ENCODE measurements at regions of chr10 and their contacts with region 1.

Region 1: GRCh38 chr10:118459726-118460193 is 117.6 kb upstream of the FAM204A start:
- H3K4me3 ChIP-seq: no peak overlapping the region
- H3K27ac ChIP-seq: no peak overlapping the region
- H3K4me1 ChIP-seq: 0 out of 2 replicates have a peak, but pooled peaks cover 3% of the 10 kb centered on the region
- CTCF ChIP-seq: peak; percentile 62

Region 2: DNA sequence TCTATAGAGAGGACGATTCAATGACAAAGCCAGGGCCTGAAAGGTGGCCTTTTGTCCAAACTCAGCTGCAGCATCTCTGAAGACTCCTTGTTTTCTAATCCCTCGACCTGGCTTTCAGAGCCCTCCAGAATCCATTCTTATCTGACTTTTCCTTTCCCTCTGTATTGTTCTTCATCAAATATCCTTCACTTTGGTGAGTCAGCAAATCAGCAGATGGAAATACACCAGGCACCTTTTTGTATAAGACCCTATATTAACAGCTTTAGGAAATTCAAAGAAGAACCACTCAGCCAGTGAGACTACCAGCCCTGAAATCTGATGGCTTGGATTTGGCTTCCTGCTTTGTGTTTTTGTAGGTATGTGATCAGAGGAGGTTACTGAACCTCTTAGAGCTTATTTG is 331.1 kb before region 1 on chr10:
- CTCF ChIA-PET with region 1: no interaction called
- POLR2A ChIA-PET with region 1: no interaction called
- H3K4me3 ChIP-seq: no peak overlapping the region
- H3K27ac ChIP-seq: no peak overlapping the region
- H3K4me1 ChIP-seq: no peaks in the 10 kb centered on the region
- CTCF ChIP-seq: no peak

Region 3: DNA sequence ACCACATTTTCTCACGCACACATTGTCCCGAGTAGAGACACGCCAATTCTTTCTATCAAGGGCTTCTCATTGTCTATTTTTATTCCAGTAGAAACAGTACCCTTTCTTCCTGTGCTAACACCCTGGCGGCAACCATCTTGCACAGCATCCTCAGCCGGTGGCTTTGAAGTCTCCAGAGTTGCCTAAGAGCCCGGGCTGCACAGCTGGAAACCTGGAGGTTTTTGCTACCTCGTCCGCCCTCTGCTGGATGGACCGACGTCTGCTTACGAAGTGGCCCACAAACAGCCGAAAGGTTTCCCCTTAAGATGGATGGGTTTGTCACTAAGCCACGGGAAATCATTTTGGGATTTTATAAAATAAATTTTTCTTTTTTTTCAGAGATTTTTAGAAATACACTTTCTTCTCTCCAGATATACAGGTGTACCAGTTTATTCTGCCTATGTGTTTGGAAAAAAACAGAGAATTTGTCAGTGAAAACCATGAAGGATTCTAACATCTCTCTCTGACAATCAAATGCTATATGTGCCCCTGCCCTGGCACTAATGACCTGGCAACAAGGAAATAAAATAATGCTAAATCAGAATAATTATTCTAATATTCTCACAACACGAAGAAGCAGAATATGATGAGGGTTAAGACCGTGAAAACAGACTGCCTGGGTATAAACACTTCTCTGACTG is 35.8 kb before region 1 on chr10:
- CTCF ChIA-PET with region 1: interaction called, 11 read pairs
- POLR2A ChIA-PET with region 1: no interaction called
- H3K4me3 ChIP-seq: no peak overlapping the region
- H3K27ac ChIP-seq: no peak overlapping the region
- H3K4me1 ChIP-seq: no peaks in the 10 kb centered on the region
- CTCF ChIP-seq: peak; percentile 72

Region 4: DNA sequence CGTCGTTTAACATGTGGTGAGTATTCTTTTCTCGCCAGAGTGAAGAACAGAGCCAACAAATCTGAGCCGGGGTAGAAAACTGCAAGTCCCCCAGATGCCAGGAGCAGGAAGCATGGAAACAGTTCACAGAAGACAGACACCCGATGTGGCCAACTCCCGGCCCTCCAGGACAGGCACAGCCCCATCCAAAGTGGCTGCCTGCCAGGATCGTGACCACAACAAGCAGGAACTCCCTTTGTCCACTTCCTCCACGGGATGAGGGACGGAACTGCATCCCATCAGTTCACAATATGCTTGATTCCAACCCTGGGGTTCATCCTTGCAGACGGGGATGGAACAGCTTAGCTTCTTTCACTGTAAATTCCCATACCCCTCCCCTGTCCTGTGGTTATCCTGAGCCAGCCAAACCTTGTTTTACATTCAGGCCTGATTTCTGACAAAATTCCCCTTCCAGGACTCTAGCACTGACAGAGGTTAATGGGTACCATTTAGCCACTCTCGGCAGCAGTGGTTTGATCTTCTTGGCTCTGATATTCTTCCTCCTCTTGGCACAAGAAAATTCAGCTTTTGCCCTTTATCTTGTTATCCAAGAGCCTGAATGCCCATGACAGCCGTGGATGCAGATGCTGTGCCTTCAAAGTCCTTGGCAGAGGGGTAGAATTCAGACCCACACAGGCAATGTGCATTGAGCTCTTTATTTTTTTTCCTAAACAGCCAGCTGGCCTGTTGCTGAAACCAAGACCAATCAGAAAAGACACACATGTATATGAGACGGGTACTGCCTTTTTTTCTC is 12.1 kb before region 1 on chr10:
- CTCF ChIA-PET with region 1: interaction called, 47 read pairs
- POLR2A ChIA-PET with region 1: no interaction called
- H3K4me3 ChIP-seq: no peak overlapping the region
- H3K27ac ChIP-seq: no peak overlapping the region
- H3K4me1 ChIP-seq: no peaks in the 10 kb centered on the region
- CTCF ChIP-seq: no peak

Region 5: GRCh38 chr10:118471863-118472262 is 12.1 kb after region 1 on chr10:
- CTCF ChIA-PET with region 1: interaction called, 21 read pairs
- POLR2A ChIA-PET with region 1: no interaction called
- H3K4me3 ChIP-seq: no peak overlapping the region
- H3K27ac ChIP-seq: no peak overlapping the region
- H3K4me1 ChIP-seq: no peaks in the 10 kb centered on the region
- CTCF ChIP-seq: no peak

Region 6: GRCh38 chr10:118543714-118544400 is 84.1 kb after region 1 on chr10:
- CTCF ChIA-PET with region 1: interaction called, 13 read pairs
- POLR2A ChIA-PET with region 1: no interaction called
- H3K4me3 ChIP-seq: no peak overlapping the region
- H3K27ac ChIP-seq: no peak overlapping the region
- H3K4me1 ChIP-seq: no peaks in the 10 kb centered on the region
- CTCF ChIP-seq: peak; percentile 81; the same call in 1 of the 2 replicates

Measured in HEK293 (cell line).